A673 (cell line): ENCODE measurements at regions of chr22 and their contacts with region 1.

Region 1: DNA sequence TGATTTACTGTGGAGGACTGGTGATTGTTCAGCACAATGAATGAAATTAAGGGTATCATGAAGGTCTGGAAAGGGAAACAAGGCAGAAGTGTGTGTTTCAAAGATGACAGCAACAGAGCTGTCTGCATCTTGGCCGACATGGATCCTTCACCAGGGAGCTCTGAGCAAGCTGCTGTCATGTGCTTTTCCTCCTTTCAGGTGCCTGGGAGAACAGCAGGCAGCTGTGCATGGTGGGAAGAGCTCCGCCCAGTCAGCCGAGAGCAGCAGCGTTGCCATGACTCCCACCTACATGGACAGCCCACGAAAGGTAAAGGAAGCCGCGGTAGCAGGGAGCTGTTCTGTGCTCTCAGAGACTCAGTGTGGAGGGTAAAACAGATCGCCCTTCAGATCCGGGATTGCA is 87.1 kb upstream of the YWHAH start:
- DNase-seq: no peak
- H3K4me3 ChIP-seq: no peak overlapping the region
- H3K27ac ChIP-seq: no peak overlapping the region
- H3K4me1 ChIP-seq: no peaks in the 10 kb centered on the region
- H3K27me3 ChIP-seq: no peaks in the 10 kb centered on the region
- CTCF ChIP-seq: no peak

Region 2: DNA sequence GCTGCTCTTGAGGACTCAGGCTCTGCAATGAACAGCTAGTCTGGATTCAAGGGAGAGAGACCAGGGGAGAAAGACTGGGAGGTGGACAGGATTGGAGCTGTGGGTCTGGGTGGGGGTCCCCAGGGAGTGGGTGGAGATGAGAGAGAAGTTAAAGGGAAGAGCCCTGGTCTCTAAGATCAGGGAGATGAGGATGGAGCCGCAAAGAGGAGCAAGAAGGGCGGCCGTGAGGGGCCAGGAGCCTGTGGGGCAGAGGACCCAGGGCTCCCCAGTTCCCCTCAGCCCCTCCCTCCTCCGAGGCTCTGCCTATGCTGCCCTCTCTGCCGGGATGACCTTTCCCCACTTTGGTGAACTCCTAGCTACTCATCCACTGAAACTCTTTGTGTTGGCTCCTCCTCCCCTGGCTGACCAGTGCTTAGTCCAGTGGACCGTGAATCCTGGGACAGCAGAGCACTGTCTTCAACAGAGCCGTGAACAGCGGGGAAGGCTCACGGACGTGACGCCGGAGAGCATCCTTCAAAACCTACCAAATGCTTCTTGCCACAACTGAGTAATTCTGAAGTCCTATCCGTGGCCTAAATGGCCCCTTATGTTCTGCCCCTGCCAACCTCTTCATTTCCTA is 484.0 kb after region 1 on chr22:
- CTCF ChIA-PET with region 1: no interaction called
- POLR2A ChIA-PET with region 1: interaction called, 11 read pairs
- intact Hi-C with region 1: no loop called
- DNase-seq: no peak
- H3K4me3 ChIP-seq: no peak overlapping the region
- H3K27ac ChIP-seq: no peak overlapping the region
- H3K4me1 ChIP-seq: no peaks in the 10 kb centered on the region
- H3K27me3 ChIP-seq: peaks cover 2% of the 10 kb centered on the region
- CTCF ChIP-seq: no peak